Activated CD4-positive, alpha-beta T cell treated with anti-CD3 and anti-CD28 coated beads for 36 hours (primary cell): ENCODE measurements at regions of chr14 and their contacts with region 1.

Region 1: GRCh38 chr14:95527387-95528002 is 7.4 kb upstream of the GLRX5 start:
- DNase-seq: peak; percentile 76
- ATAC-seq: no peak
- H3K4me3 Mint-ChIP-seq: no peak overlapping the region
- H3K27ac Mint-ChIP-seq: peak overlapping the region; percentile 90
- H3K4me1 Mint-ChIP-seq: peaks cover 81% of the 10 kb centered on the region
- H3K27me3 Mint-ChIP-seq: no peaks in the 10 kb centered on the region

Region 2: GRCh38 chr14:94697773-94698556 is 829.5 kb before region 1 on chr14:
- CTCF ChIA-PET with region 1: no interaction called
- POLR2A ChIA-PET with region 1: no interaction called
- intact Hi-C with region 1: no loop called
- DNase-seq: no peak
- ATAC-seq: no peak
- H3K4me3 Mint-ChIP-seq: no peak overlapping the region
- H3K27ac Mint-ChIP-seq: no peak overlapping the region
- H3K4me1 Mint-ChIP-seq: no peaks in the 10 kb centered on the region
- H3K27me3 Mint-ChIP-seq: peaks cover 5% of the 10 kb centered on the region

Region 3: GRCh38 chr14:95098984-95099599 is 428.4 kb before region 1 on chr14:
- CTCF ChIA-PET with region 1: no interaction called
- POLR2A ChIA-PET with region 1: no interaction called
- intact Hi-C with region 1: no loop called
- DNase-seq: peak; percentile 59
- ATAC-seq: peak; percentile 49
- H3K4me3 Mint-ChIP-seq: no peak overlapping the region
- H3K27ac Mint-ChIP-seq: no peak overlapping the region
- H3K4me1 Mint-ChIP-seq: peaks cover 14% of the 10 kb centered on the region
- H3K27me3 Mint-ChIP-seq: no peaks in the 10 kb centered on the region

Region 4: GRCh38 chr14:95442633-95443021 is 84.9 kb before region 1 on chr14:
- CTCF ChIA-PET with region 1: interaction called, 88 read pairs
- POLR2A ChIA-PET with region 1: interaction called, 7 read pairs
- intact Hi-C with region 1: loop called (anchors 1 kb)
- DNase-seq: peak; percentile 87
- ATAC-seq: peak; percentile 98
- H3K4me3 Mint-ChIP-seq: no peak overlapping the region
- H3K27ac Mint-ChIP-seq: peak overlapping the region; percentile 82
- H3K4me1 Mint-ChIP-seq: peaks cover 4% of the 10 kb centered on the region
- H3K27me3 Mint-ChIP-seq: no peaks in the 10 kb centered on the region

Region 5: DNA sequence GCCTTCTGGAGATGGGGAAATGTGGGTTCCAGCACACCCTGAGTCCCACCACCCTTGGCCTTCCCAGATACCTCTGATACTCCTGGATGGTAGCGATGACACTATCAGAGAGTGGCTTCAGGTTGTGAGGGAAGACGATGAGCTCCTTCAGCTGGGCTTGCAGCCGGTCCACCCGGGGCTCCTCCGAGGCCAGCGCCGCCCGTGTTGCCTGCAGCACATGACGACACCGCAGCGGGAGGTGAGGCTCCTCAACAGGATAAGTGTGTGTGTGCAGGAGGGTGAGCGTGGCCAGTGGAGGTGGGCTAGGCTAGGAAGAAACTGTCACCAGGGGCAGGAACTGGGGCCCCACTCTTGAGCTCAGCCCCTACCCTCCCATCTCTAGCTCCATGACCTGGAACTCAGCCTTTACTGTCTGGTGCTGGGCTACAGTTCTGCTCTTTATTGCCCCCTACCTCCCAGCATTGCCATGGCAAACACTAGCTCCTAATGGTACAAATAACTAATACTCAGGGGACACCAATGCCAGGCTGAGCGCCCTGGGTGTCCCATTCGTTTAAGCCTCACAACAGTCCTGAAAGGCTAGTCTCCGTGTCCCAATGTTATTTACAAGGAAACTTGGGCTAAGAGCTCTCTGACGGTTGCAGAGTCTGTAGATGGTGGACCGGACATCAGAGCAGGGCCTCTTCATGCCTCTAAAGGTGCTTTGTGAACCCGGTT is 75.2 kb before region 1 on chr14:
- CTCF ChIA-PET with region 1: interaction called, 16 read pairs
- POLR2A ChIA-PET with region 1: no interaction called
- intact Hi-C with region 1: no loop called
- DNase-seq: peak; percentile 26
- ATAC-seq: no peak
- H3K4me3 Mint-ChIP-seq: no peak overlapping the region
- H3K27ac Mint-ChIP-seq: no peak overlapping the region
- H3K4me1 Mint-ChIP-seq: no peaks in the 10 kb centered on the region
- H3K27me3 Mint-ChIP-seq: no peaks in the 10 kb centered on the region

Region 6: GRCh38 chr14:95463171-95463901 is 64.2 kb before region 1 on chr14:
- CTCF ChIA-PET with region 1: interaction called, 12 read pairs
- POLR2A ChIA-PET with region 1: interaction called, 4 read pairs
- intact Hi-C with region 1: no loop called
- DNase-seq: peak; percentile 44
- ATAC-seq: peak; percentile 65
- H3K4me3 Mint-ChIP-seq: no peak overlapping the region
- H3K27ac Mint-ChIP-seq: peak overlapping the region; percentile 72
- H3K4me1 Mint-ChIP-seq: peaks cover 76% of the 10 kb centered on the region
- H3K27me3 Mint-ChIP-seq: no peaks in the 10 kb centered on the region

Region 7: DNA sequence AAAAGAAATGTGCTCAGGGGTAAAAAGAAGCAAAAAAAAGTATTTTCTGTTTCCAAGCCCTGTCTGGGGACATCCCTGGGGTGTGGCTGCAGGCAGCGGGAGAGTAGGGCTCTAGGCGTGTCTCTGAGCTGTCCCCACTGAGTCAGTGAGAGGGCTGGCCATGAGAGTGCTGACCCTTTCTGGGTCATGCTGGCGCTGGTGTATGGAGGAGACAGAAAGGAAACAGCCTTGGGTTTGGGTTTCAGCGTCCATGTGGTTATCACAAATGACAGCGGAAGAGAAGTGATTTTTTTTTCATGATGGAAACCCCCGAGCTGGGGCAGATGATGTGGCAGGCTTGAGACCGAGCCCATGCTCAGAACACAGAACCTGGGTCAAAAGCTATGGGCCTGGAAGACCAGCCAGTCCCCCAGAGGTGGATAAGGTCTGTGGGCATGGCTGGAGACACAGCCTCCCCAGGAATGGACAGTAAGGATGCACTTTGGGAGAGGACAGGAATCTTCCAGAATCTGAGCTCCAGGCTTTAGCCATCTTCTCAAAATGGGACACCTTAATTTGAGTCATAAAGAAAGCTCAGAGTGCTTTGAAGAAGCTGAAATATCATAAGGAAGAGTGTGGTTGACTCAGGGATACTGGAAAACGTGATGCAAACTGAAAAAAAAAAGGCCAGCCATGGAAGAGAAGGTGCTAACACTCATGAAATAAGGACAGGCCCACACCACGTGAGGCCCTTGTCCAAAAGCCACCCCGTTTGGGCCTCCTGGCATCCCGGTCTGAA is 47.2 kb before region 1 on chr14:
- CTCF ChIA-PET with region 1: interaction called, 10 read pairs
- POLR2A ChIA-PET with region 1: interaction called, 10 read pairs
- intact Hi-C with region 1: loop called (anchors 1 kb)
- DNase-seq: peak; percentile 66
- ATAC-seq: peak; percentile 87
- H3K4me3 Mint-ChIP-seq: peak overlapping the region; percentile 12
- H3K27ac Mint-ChIP-seq: peak overlapping the region; percentile 85
- H3K4me1 Mint-ChIP-seq: peaks cover 43% of the 10 kb centered on the region
- H3K27me3 Mint-ChIP-seq: no peaks in the 10 kb centered on the region

Region 8: DNA sequence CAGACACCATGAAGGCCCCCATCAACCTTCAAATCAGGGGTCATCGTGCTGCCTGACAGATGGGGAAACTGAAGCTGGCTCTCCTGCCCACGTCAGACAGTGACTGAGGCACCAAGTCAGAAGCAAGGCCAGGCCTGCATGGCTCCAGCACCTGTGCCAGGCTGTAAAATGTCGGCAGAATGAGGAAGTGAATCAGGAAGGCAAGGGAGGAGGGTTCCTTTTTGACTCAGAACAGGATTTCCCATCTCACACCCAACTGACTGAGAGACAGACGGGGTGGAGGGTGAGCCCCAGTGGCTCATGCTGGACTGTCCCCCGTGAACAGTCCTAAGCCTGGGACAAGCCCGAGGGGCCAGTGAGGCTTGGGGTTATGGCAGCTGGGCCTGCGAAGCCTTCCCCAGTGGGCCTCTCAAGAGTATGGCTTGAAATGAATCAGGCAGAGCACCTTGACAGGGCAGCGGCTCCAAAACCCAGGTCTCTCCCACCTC is 31.9 kb before region 1 on chr14:
- CTCF ChIA-PET with region 1: interaction called, 12 read pairs
- POLR2A ChIA-PET with region 1: interaction called, 8 read pairs
- intact Hi-C with region 1: loop called (anchors 1 to 5 kb)
- DNase-seq: peak; percentile 49
- ATAC-seq: peak; percentile 78
- H3K4me3 Mint-ChIP-seq: peak overlapping the region; percentile 8
- H3K27ac Mint-ChIP-seq: peak overlapping the region; percentile 76
- H3K4me1 Mint-ChIP-seq: peaks cover 66% of the 10 kb centered on the region
- H3K27me3 Mint-ChIP-seq: no peaks in the 10 kb centered on the region

Region 9: DNA sequence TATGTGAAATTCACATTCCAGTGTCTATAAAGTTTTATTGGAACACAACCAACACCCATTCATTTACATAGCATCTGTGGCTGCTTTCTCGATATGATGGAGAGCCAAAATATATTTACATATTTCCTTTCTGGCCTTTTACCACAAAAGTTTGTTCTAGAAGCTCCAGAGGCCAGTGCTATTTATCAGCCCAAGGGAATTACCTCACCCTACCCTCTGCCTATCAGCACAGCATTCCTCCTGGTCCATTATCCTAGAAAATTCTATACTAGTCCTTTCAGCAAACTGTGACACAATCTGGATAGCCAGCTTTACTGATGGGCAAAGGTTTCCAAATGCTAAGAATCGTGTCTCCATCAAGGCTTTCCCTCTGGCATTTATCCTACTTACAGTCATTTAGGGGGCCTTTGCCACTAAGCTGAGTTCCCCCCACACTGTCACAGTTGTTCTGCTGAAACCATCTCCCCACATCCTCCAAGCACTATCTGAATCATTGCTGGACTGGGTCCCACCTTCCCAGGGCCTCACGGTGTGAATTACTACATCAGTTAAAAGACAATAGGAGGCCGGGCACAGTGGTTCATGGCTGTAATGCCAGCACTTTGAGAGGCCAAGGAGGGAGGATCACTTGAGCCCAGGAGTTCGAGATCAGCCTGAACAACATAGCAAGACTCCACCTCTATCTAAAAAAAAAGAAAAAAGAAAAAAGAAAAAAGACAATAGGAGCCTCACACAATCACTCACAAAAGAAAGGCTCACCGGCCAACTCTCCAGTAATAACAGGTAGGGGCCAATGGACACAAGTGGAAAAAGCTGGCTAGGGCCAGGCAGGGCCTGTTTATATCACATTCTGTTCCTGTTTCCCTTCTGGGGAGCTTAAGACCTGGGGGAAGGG is 23.1 kb before region 1 on chr14:
- CTCF ChIA-PET with region 1: interaction called, 7 read pairs
- POLR2A ChIA-PET with region 1: interaction called, 8 read pairs
- intact Hi-C with region 1: loop called in 1 of 2 experiments (anchors 1 kb)
- DNase-seq: peak; percentile 60
- ATAC-seq: peak; percentile 82
- H3K4me3 Mint-ChIP-seq: peak overlapping the region; percentile 49
- H3K27ac Mint-ChIP-seq: peak overlapping the region; percentile 87
- H3K4me1 Mint-ChIP-seq: peaks cover 84% of the 10 kb centered on the region
- H3K27me3 Mint-ChIP-seq: no peaks in the 10 kb centered on the region